ENCODE measurements at regions of chr2 and their contacts with region 1.

Region 1: DNA sequence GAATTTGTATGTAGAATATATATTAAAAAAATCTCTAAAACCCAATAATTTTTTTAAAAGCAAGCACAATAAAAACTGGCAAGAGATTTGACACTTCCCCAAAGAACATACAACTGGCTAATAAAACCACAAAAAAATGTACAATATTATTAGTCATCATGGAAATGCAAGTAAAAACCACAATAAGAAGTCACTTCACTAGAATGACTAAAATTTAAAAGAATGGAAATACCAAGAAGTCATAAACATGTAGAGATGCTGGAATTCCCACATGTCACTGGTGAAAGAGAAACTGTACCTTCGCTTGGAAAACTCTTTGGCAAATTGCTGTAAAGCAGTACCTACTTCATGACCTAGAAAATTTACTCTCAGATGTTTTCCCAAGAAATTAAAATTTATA is 43.4 kb upstream of the KYNU start:
- DNase-seq: peak in 2 of 3 donors; percentile 23 to 87
- H3K4me3 ChIP-seq: no peak overlapping the region
- H3K4me3 Mint-ChIP-seq: no peak overlapping the region
- H3K27ac ChIP-seq: no peak overlapping the region
- H3K27ac Mint-ChIP-seq: peak overlapping the region in 1 of 7 donors; percentile 20
- H3K4me1 ChIP-seq: peaks cover 0 to 14% of the 10 kb centered on the region in 2 donors
- H3K4me1 Mint-ChIP-seq: peaks cover 10% of the 10 kb centered on the region
- H3K27me3 ChIP-seq: no peaks in the 10 kb centered on the region
- H3K27me3 Mint-ChIP-seq: peaks cover 3 to 9% (median 5%) of the 10 kb centered on the region in 3 donors
- CTCF ChIP-seq: no peak

Region 2: GRCh38 chr2:142682528-142682927 is 151.5 kb before region 1 on chr2:
- intact Hi-C with region 1: no loop called
- DNase-seq: peak in 2 of 3 donors; percentile 14 to 22
- H3K4me3 ChIP-seq: no peak overlapping the region
- H3K4me3 Mint-ChIP-seq: no peak overlapping the region
- H3K27ac ChIP-seq: no peak overlapping the region
- H3K27ac Mint-ChIP-seq: no peak overlapping the region
- H3K4me1 ChIP-seq: no peaks in the 10 kb centered on the region
- H3K4me1 Mint-ChIP-seq: no peaks in the 10 kb centered on the region
- H3K27me3 ChIP-seq: no peaks in the 10 kb centered on the region
- H3K27me3 Mint-ChIP-seq: peaks cover 0 to 5% (median 2%) of the 10 kb centered on the region in 3 donors
- CTCF ChIP-seq: peak; percentile 39

Region 3: DNA sequence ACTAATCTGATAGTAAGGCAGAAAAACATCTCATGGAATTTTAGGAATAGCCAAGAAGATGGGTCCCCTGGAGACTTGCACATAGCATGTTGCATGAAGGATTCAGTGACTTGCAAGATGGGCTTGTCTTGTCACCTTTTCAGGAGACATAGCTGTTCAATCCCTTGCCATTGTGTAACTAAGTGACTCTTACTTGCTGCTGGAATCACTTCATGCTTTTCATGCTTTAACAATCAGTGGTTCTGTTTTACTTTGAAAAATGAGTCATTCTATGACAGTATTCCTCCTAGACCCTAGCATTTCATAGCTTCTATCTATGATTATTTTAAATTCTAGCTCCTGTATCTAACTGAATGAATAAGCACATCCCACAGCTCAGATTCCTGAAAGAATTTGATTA is 46.2 kb after region 1 on chr2:
- intact Hi-C with region 1: loop called in 1 of 2 experiments (anchors 10 kb)
- DNase-seq: peak; percentile 75 to 93 (median 86)
- H3K4me3 ChIP-seq: peak overlapping the region in 2 of 3 experiments; percentile 81 to 99
- H3K4me3 Mint-ChIP-seq: peak overlapping the region; percentile 85 to 91
- H3K27ac ChIP-seq: peak overlapping the region in 1 of 2 donors; percentile 91
- H3K27ac Mint-ChIP-seq: peak overlapping the region; percentile 84 to 100 (median 85)
- H3K4me1 ChIP-seq: peaks cover 42 to 48% of the 10 kb centered on the region in 2 donors
- H3K4me1 Mint-ChIP-seq: peaks cover 55% of the 10 kb centered on the region
- H3K27me3 ChIP-seq: no peaks in the 10 kb centered on the region
- H3K27me3 Mint-ChIP-seq: peaks cover 0 to 2% (median 0%) of the 10 kb centered on the region in 3 donors
- CTCF ChIP-seq: no peak

Region 4: DNA sequence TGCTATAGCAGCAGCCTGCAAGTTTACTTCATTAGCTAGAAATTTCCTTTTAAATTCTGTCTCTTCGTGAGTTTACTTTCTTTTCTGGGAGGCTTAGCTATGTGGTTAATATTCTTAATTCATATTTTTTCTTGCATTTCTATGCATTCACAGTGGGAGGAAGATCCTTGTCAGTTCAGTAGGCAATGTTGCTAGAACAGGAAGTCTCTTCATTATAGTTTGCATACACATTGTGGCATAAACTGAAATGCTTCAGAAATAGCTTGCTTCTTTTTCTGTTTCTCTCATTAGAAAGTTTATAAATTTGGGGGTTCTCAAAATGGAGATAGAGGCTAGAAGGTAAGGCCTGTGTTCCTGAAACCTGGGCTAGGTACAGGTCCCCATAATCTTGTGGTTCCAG is 287.1 kb after region 1 on chr2:
- intact Hi-C with region 1: no loop called
- DNase-seq: no peak
- H3K4me3 ChIP-seq: no peak overlapping the region
- H3K4me3 Mint-ChIP-seq: no peak overlapping the region
- H3K27ac ChIP-seq: no peak overlapping the region
- H3K27ac Mint-ChIP-seq: no peak overlapping the region
- H3K4me1 ChIP-seq: peaks cover 17 to 33% of the 10 kb centered on the region in 2 donors
- H3K4me1 Mint-ChIP-seq: peaks cover 4% of the 10 kb centered on the region
- H3K27me3 ChIP-seq: no peaks in the 10 kb centered on the region
- H3K27me3 Mint-ChIP-seq: no peaks in the 10 kb centered on the region
- CTCF ChIP-seq: no peak

Measured in CD14-positive monocyte (primary cell).